H1 (cell line): ENCODE measurements at regions of chr2 and their contacts with region 1.

Region 1: DNA sequence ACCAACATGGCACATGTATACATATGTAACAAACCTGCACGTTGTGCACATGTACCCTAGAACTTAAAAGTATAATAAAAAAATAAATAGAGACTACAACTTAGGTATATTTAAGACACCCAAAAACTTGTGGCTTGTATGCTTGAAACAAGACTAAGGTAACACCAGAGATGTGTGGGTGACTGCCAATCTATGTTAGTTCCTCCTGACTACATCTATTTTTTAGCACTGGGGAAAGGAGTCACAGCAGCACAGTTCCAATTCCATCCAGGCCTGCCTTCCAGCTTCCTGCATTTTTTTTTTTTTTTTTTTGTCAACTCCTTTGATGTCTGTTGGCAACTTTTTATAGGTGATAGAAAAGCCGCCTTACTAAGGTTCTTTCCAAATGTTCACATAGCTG is 18.2 kb downstream of the C2orf69 start:
- DNase-seq: no peak
- H3K4me3 ChIP-seq: no peak overlapping the region
- H3K27ac ChIP-seq: no peak overlapping the region
- H3K4me1 ChIP-seq: peaks cover 0 to 8% (median 0%) of the 10 kb centered on the region in 4 experiments; a peak in 3 of 7 replicates
- H3K27me3 ChIP-seq: no peaks in the 10 kb centered on the region
- CTCF ChIP-seq: no peak
- EP300 ChIP-seq: no peak
- POLR2A ChIP-seq: no peak
- RAD21 ChIP-seq: no peak

Region 2: DNA sequence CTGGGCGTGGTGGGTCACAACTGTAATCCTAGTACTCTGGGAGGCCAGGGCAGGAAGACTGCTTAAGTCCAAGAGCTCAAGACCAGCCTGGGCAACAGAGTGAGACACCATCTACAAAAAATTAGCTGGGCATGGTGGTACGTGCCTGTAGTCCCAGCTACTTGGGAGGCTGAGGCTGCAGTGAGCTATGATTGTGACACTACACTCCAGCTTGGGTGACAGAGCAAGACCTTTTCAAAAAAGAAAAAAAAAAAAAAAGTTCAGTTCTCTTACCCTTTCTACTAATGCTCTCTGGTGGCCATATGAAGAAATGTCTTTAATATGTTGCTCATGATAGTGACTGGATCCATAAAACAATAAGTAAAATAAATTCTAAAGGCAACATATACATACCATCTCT is 11.1 kb after region 1 on chr2:
- CTCF ChIA-PET with region 1: interaction called, 4 read pairs
- POLR2A ChIA-PET with region 1: interaction called, 10 read pairs
- DNase-seq: no peak
- H3K4me3 ChIP-seq: no peak overlapping the region
- H3K27ac ChIP-seq: no peak overlapping the region
- H3K4me1 ChIP-seq: no peaks in the 10 kb centered on the region
- H3K27me3 ChIP-seq: no peaks in the 10 kb centered on the region
- CTCF ChIP-seq: peak in 2 of 3 experiments; percentile 21 to 29; a peak in 2 of 4 replicates
- EP300 ChIP-seq: no peak
- POLR2A ChIP-seq: no peak
- RAD21 ChIP-seq: peak in 1 of 2 experiments; percentile 50

Region 3: DNA sequence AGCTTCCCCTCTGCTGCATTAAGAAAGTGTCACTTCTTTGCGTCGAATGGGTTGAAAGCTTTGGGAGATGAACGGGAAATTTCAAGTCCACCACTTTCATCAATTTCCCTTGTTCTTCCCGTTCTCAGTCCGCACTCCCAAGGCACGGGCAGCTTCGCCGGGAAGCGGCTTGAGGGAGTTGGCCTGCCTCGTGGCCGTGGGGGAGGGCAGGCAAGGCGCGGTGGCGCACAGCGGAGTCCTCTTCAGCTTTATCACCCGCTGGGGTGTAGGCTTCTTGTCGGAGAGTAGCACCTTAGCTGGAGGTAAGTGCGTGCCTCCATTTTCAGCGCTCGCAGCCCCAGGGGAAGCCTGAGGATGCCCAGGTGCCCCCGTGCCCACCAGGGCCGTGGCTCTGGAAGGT is 560.7 kb after region 1 on chr2:
- CTCF ChIA-PET with region 1: no interaction called
- POLR2A ChIA-PET with region 1: no interaction called
- DNase-seq: no peak
- H3K4me3 ChIP-seq: no peak overlapping the region
- H3K27ac ChIP-seq: no peak overlapping the region
- H3K4me1 ChIP-seq: peaks cover 0 to 2% (median 0%) of the 10 kb centered on the region in 4 experiments; a peak in 1 of 7 replicates
- H3K27me3 ChIP-seq: no peaks in the 10 kb centered on the region
- CTCF ChIP-seq: no peak
- EP300 ChIP-seq: no peak
- POLR2A ChIP-seq: no peak
- RAD21 ChIP-seq: no peak